ENCODE measurements at regions of chr1 and their contacts with region 1.

Region 1: DNA sequence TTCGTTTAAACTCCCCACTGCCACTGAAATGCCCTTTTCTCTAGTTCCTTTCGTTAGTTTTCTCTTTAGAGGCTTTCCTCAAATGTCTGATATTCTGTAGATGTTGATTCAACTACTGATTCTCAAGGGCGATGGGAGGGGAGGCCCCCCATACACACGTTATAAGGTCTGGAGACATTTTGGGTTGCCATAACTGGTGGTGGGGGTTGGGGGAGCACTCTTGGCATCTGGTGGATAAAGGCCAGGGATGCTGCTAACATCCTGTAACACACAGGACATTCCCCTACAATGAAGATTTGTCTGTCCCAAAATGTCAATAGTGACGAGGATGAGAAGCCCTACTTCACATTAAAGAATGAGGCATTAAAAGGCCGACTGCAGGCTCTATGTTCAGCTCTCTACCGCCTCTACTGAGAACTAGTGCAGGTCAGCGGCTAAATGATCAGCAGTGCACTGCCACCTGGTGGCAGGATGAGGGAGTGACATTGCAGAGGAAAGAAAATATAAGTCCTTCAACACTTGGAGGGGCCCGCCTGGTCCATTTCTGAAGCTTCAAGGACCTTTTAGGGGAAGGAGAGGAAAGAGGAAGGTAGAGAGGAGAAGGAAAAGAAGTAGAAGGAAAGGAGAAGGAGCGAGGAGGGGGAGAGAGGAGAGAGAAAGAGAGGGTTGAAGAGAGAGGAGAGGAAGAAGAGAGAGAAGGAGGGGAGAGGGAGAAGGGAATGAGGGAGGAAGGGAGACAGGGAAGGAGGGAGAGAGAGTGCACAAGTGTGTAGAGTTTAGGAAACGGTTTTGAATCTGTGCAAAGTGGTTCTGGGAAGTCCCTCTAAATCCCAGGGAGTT is 29.4 kb downstream of the ALG14 start:
- DNase-seq: peak; percentile 19
- ATAC-seq: peak; percentile 99
- H3K4me3 ChIP-seq: no peak overlapping the region
- H3K27ac ChIP-seq: no peak overlapping the region
- H3K4me1 ChIP-seq: no peaks in the 10 kb centered on the region
- H3K27me3 ChIP-seq: no peaks in the 10 kb centered on the region
- CTCF ChIP-seq: peak; percentile 97 to 99 (median 99)
- EP300 ChIP-seq: no peak
- POLR2A ChIP-seq: no peak
- RAD21 ChIP-seq: peak; percentile 99

Region 2: GRCh38 chr1:94854458-94855306 is 188.7 kb before region 1 on chr1:
- CTCF ChIA-PET with region 1: interaction called, 120 read pairs
- POLR2A ChIA-PET with region 1: no interaction called
- RAD21 ChIA-PET with region 1: interaction called, 67 read pairs
- SMC1A ChIA-PET with region 1: interaction called, 56 read pairs
- in situ Hi-C with region 1: loop called (anchors 5 kb)
- intact Hi-C with region 1: loop called (anchors 1 kb)
- DNase-seq: peak; percentile 48
- ATAC-seq: peak; percentile 100
- H3K4me3 ChIP-seq: peak overlapping the region; percentile 53; the same call in 1 of the 2 replicates
- H3K27ac ChIP-seq: no peak overlapping the region
- H3K4me1 ChIP-seq: no peaks in the 10 kb centered on the region
- H3K27me3 ChIP-seq: no peaks in the 10 kb centered on the region; a peak in 1 of 4 replicates
- CTCF ChIP-seq: peak; percentile 87 to 93 (median 93)
- EP300 ChIP-seq: no peak
- POLR2A ChIP-seq: no peak
- RAD21 ChIP-seq: peak; percentile 87

Region 3: DNA sequence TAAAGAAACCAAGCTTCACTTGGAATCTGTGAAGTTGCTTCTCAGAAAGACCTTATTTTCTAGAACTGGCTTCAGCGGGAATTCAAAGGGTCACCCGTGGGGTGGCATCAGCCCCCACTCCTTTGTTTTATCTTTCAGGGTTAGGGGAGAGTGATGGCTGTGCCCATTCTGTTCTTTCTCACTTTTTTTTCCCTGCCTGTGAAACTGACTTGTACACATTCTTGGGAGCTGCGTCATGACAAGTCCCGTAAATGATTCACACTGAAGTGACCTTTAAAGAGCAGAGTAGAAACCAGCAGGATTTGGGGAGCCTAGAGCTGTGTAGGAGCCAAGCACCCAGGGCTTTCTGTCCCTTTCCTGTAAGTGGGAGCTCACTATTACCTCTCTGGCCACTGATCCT is 179.4 kb before region 1 on chr1:
- CTCF ChIA-PET with region 1: interaction called, 10 read pairs
- POLR2A ChIA-PET with region 1: no interaction called
- RAD21 ChIA-PET with region 1: no interaction called
- SMC1A ChIA-PET with region 1: interaction called, 8 read pairs
- in situ Hi-C with region 1: no loop called
- intact Hi-C with region 1: no loop called
- DNase-seq: no peak
- ATAC-seq: no peak
- H3K4me3 ChIP-seq: no peak overlapping the region
- H3K27ac ChIP-seq: no peak overlapping the region
- H3K4me1 ChIP-seq: no peaks in the 10 kb centered on the region
- H3K27me3 ChIP-seq: no peaks in the 10 kb centered on the region; a peak in 1 of 4 replicates
- CTCF ChIP-seq: no peak
- EP300 ChIP-seq: no peak
- POLR2A ChIP-seq: no peak
- RAD21 ChIP-seq: no peak

Measured in GM12878 (cell line).